ENCODE measurements at regions of chr3 and their contacts with region 1.

Region 1: DNA sequence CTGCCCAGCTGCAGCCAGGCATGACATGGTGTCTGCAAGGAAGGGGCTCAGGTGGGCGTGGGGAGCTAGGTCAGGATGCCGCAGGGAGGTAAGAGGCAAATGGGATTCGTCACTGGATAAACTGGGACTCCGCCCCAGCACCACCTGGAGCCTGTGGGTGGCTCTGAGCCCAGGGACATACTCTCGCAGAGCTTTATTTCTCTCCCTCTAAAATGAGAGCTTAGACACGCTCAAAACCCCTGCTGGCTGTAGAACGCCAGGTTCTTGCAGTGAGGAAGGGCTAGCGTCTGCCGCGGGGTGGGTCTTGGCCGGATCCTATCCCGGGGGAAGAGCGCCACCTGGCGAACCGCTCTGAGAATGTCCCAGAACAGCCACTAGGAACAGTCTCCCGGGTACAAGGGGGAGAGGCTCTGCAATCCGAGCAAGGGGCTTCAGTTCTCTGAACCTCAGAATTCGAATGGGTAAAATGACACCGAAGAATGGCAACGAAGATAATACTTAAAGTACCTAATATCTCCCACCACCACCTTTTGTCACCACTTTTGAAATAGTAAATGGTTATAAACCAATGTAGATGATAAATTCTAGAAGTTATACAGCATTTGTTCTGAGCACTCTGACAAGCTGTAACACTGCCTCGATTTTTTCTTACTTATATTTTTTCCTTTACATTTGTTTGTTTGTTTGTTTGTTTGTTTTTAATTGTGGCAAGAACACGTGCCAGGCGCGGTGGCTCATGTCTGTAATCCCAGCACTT is 53.2 kb upstream of the SRGAP3 start:
- DNase-seq: peak; percentile 69 to 82
- ATAC-seq: peak; percentile 92 to 97 (median 94)
- H3K4me3 ChIP-seq: peak overlapping the region in 8 of 10 donors; percentile 15 to 52 (median 38)
- H3K27ac ChIP-seq: no peak overlapping the region
- H3K4me1 ChIP-seq: peaks cover 0 to 9% (median 5%) of the 10 kb centered on the region in 9 donors
- H3K27me3 ChIP-seq: peaks cover 0 to 6% (median 0%) of the 10 kb centered on the region in 7 donors
- CTCF ChIP-seq: peak; percentile 77 to 95 (median 89)

Region 2: GRCh38 chr3:8970971-8971589 is 331.5 kb before region 1 on chr3:
- intact Hi-C with region 1: loop called (anchors 1 to 5 kb)
- DNase-seq: peak in 1 of 2 donors; percentile 61
- ATAC-seq: peak; percentile 45 to 82 (median 64)
- H3K4me3 ChIP-seq: no peak overlapping the region
- H3K27ac ChIP-seq: no peak overlapping the region
- H3K4me1 ChIP-seq: peaks cover 0 to 6% (median 0%) of the 10 kb centered on the region in 9 donors
- H3K27me3 ChIP-seq: peaks cover 0 to 12% (median 0%) of the 10 kb centered on the region in 7 donors
- CTCF ChIP-seq: peak; percentile 95 to 100 (median 99)

Region 3: DNA sequence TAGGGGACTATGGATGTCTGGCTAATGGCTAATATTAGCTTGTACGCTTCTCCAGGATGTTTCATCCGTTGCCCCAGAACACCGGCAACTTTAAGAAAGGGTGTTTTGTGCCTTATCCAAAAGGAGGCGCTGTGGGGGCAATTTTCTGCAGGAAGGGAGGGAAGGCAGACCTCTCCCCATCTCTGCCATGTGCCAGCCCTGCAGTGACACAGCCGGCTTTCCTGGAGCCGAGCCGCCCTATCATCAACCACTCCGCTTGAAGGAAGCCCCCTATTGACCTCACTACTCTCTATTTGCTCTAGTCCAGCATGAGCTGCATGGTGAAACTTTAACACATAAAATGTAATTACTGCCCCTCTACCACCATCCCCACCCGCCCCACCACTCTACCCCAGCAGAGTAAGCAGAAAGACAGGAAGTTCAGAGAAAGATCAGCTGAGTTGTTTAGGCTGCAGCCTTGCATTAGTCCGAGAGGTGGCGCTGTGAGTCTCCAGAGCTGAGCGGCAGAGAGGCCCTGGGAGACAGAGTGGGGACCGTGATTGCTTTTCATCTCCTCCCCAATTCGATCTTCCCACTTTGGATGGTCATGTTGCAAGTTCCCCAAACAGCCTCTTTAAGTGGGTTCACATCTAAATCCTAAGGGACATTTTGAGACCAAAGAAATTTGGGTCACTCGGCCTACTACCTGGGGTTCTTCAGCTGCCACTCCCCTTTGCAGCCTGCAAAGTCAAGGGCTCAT is 314.8 kb before region 1 on chr3:
- intact Hi-C with region 1: loop called in 8 of 10 experiments (anchors 1 to 5 kb)
- DNase-seq: peak; percentile 60 to 65
- ATAC-seq: peak; percentile 67 to 84 (median 72)
- H3K4me3 ChIP-seq: no peak overlapping the region
- H3K27ac ChIP-seq: no peak overlapping the region
- H3K4me1 ChIP-seq: peaks cover 0 to 22% (median 8%) of the 10 kb centered on the region in 9 donors
- H3K27me3 ChIP-seq: no peaks in the 10 kb centered on the region
- CTCF ChIP-seq: peak; percentile 62 to 81 (median 80)

Region 4: DNA sequence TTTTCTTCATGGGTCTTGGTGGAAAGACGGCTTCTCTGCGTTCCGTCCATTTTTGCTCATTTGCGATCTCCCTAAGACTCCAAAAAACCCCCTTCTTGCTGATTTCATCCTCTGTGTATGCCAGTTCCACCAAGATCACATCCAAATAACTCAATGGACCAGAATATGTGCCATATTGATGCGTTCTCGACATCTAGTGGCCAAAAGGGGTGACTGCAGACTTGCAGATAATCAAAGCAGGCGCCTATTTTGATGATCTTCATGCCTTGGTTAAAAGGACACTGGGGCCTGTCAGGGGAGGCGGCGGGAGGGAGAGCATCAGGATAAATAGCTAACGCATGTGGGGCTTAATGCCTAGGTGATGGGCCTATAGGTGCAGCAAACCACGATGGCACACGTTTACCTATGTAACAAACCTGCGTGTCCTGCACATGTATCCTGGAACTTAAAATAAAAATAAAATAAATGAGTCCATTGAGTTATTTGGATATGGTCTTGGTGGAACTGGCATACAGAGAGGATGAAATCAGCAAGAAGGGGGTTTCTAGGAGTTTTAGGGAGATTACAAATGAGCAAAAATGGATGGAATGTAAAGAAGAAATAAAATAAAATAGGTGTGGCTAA is 235.1 kb before region 1 on chr3:
- intact Hi-C with region 1: loop called (anchors 5 to 10 kb)
- DNase-seq: peak in 1 of 2 donors; percentile 58
- ATAC-seq: peak; percentile 56 to 85 (median 73)
- H3K4me3 ChIP-seq: no peak overlapping the region
- H3K27ac ChIP-seq: peak overlapping the region in 6 of 10 donors; percentile 1 to 71 (median 22)
- H3K4me1 ChIP-seq: peaks cover 0 to 40% (median 20%) of the 10 kb centered on the region in 9 donors
- H3K27me3 ChIP-seq: no peaks in the 10 kb centered on the region
- CTCF ChIP-seq: peak; percentile 88 to 97 (median 92)

Region 5: DNA sequence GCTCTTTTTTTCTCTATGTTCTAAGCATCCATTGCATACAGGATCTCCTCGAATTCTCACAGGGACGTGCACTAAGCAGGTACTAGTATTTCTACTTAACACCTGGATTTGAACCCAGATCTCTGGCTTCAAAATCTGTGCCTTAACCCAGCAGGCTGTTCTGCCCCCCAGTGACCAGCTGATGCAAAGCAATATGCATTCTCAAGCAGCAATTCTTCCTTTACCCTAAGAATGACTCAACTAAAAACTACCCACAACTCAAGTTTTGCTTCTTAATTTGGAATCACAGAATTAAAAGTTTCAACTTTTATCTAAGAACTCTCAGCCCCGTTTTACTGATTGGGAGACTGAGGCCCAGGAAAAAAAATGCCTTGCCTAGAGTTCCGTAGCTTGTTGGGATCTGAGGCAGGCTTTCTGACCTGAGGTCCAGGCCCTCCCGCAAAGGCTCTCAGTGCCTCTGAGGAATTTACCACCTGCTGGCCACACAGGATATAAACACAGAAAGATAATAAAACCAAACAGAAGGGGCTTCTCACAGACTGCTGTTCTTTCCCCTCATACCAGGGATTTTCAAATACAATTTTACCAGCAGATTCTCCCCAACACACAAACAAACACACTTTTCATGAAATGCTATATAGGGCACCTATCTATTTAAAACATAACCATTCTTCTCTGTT is 223.9 kb before region 1 on chr3:
- intact Hi-C with region 1: loop called in 4 of 10 experiments (anchors 5 to 10 kb)
- DNase-seq: no peak
- ATAC-seq: no peak
- H3K4me3 ChIP-seq: no peak overlapping the region
- H3K27ac ChIP-seq: no peak overlapping the region
- H3K4me1 ChIP-seq: peaks cover 0 to 9% (median 0%) of the 10 kb centered on the region in 9 donors
- H3K27me3 ChIP-seq: no peaks in the 10 kb centered on the region
- CTCF ChIP-seq: no peak

Measured in heart right ventricle (tissue), 16 donors.